ENCODE measurements at regions of chr9 and their contacts with region 1.

Region 1: GRCh38 chr9:136485049-136486045 is 2.5 kb upstream of the SEC16A start:
- DNase-seq: peak; percentile 42
- H3K4me3 ChIP-seq: no peak overlapping the region
- CTCF ChIP-seq: peak; percentile 83

Region 2: DNA sequence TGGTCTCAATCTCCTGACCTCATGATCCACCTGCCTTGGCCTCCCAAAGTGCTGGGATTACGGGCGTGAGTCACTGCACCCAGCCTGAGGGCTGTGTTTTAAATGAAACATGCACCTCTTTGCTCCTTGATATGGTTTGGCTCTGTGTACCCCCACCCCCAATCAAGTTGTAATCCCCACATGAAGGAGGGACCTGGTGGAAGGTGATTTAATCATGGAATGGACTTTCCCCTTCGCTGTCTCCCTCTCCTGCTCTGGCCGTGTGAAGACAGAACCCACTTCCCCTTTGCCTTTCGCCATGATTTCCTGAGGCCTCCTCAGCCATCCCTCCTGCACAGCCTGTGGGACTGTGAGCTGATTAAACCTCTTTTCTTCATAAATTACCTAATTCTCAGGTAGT is 73.0 kb after region 1 on chr9:
- in situ Hi-C with region 1: loop called (anchors 5 kb)
- DNase-seq: no peak
- H3K4me3 ChIP-seq: no peak overlapping the region
- CTCF ChIP-seq: no peak

Region 3: DNA sequence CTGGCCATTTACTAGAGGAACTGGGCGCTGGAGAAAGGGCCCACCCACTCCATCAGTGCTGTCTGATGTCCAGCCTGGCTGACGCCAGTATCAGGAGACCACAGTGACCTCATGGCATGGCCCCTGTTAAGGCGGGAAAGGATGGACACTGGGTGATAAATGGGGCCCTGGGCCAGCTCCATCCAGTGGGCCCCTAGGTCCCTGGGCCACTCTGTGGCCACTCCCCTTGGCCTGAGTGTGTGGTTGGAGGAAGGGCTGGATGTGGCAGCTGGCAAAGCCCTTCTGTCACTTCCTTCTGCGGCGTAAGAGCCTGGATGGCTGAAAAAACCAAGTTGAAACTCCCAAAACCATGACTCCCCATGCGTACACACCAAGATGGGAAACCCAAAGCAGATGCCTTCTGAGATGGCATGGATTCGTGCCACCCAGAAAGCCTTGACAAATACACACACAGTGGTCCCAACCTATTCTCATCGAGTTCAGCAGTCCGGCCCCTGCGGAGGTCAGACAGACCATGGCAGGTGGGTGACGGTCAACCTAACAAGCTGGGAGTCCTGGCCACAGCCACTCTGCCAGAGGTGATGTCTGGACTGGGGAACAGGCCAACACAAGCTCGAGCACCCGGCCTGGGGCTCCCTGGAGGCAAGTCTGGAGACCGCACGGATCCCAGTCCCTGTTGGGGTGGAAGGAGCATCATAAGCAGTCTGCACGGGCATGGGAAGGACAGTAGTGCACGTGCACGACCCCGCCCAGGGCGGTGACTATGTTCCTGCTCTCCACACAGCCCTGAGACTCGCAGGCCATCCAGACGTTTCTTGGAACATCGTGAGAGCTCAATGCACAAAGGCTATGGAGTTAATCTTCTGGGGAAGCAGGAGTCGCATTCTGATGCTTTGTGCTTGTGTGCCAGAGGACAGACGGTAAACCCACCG is 105.7 kb after region 1 on chr9:
- in situ Hi-C with region 1: loop called (anchors 5 kb)
- DNase-seq: no peak
- H3K4me3 ChIP-seq: no peak overlapping the region
- CTCF ChIP-seq: no peak

Region 4: DNA sequence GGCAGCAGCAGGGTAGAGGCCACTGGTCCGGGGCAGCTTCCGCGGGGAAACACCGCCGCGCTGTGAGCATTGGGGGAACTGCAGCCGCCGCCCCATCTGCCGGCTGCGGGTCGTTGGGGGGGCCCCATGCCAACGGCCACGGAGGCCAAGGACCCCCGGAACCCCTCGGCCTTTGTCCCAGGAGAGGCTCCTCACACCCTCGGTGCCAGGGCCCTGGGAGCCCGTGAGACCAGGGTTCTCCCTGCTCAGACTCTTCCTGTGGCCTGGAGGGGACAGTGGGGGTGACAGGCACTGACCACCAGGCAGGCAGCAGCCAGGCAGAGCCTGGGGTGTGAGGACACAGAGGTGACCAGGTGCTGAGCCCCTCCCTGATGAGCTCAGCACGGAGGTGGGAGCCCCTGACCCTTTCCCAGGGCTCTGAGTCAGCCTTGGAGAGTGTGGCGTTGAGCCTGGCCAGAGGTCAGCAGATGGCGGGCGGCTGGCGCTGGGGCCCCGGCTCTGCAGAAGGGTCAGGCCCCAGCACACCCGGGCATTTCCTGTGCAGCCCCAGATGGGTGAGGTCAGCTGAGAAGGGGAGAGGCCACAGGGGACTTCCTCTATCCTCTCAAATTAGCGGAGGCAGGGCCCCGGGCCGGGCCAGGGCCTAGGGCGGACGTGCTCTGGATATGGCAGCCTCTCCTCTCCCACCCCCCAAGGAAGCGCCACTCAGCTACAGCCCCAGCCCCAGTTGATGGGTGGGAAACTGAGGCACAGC is 159.4 kb after region 1 on chr9:
- in situ Hi-C with region 1: loop called (anchors 5 kb)
- DNase-seq: no peak
- H3K4me3 ChIP-seq: no peak overlapping the region
- CTCF ChIP-seq: peak; percentile 89